ENCODE measurements at regions of chr19 and their contacts with region 1.

Region 1: DNA sequence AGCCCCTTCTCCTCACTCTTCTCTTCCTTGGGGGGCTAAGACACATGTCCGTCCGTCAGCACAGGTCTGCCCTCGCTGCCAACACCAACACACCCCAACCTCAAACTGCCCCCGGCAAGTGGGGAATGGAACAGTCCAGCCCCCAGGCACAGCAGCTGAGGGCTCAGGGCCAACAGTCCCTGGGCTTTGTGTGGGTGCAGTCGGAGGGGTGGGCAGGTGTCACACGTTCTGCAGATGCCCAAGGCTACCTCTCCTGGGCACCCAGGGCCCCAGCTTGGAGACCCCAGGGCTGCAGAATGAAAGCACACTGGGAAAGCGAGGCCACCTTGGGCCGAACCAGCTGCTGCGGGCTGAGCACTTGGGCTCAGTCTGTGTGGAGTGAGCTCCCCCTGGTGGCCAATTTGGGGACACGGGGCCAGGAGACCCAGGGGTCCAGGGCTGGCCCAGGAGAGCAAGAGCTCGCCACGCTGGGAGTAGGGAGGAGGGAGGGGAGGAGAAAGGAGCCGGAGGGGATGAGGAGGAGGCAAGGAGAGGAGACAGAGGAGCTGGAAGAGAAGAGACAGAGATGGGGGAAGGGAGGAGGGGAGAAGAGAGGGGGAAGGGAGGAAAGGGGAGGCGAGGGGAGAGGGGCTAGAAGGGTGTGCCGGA is 14.0 kb upstream of the ATP8B3 start:
- DNase-seq: peak; percentile 70 to 75 (median 73)
- H3K4me3 ChIP-seq: no peak overlapping the region
- H3K4me3 Mint-ChIP-seq: peak overlapping the region in 2 of 8 donors; percentile 2 to 59
- H3K27ac ChIP-seq: no peak overlapping the region
- H3K27ac Mint-ChIP-seq: peak overlapping the region in 1 of 7 donors; percentile 47
- H3K4me1 ChIP-seq: peaks cover 6% of the 10 kb centered on the region
- H3K4me1 Mint-ChIP-seq: peaks cover 0 to 9% (median 2%) of the 10 kb centered on the region in 4 donors
- H3K27me3 ChIP-seq: no peaks in the 10 kb centered on the region
- H3K27me3 Mint-ChIP-seq: no peaks in the 10 kb centered on the region

Region 2: DNA sequence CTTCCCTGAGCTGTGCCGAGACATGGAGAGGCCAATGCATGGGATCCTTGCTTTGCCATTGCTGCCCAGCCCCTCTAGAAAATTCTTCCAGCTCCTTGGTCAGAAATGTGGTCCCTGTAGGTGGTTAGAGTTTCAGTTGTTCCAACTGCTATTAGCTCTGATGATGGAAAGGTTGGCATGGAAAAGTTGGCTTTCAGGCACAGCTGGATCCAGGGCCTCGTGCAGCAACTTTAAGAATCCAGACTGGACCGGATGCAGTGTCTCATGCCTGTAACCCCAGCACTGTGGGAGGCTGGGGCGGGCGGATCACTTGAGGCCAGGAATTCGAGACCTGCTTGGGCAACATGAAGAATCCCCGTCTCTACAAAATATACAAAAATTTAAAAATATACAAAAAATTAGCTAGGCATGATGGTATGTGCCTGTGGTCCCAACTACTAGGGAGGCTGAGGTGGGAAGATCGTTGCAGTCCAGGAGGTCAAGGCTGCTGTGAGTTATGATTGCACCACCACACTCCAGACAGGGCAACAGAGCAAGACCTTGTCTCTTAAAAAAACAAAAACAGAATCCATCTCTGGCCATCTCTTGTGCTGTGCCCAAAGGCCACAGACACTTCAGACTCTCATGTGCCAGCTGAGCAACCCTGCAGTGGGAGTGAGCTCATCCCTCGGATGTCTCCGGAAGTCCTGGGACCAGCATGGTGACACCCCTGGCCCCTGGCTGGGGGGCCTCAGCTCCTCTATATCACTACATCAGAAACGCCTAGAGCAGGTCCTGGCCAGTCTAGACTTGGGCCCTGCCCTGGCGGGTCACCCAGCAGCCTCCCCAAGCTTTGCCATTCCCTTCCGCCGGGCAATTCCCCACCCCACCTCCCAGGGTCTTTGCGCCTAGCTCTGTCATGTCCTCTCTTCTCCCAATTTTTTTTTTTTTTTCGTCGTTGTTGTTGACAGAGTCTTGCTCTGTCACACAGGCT is 274.7 kb before region 1 on chr19:
- CTCF ChIA-PET with region 1: interaction called, 16 read pairs
- POLR2A ChIA-PET with region 1: no interaction called
- intact Hi-C with region 1: no loop called
- DNase-seq: no peak
- H3K4me3 ChIP-seq: no peak overlapping the region
- H3K4me3 Mint-ChIP-seq: no peak overlapping the region
- H3K27ac ChIP-seq: no peak overlapping the region
- H3K27ac Mint-ChIP-seq: peak overlapping the region in 1 of 7 donors; percentile 63
- H3K4me1 ChIP-seq: no peaks in the 10 kb centered on the region
- H3K4me1 Mint-ChIP-seq: peaks cover 0 to 2% (median 0%) of the 10 kb centered on the region in 4 donors
- H3K27me3 ChIP-seq: no peaks in the 10 kb centered on the region
- H3K27me3 Mint-ChIP-seq: peaks cover 3 to 15% of the 10 kb centered on the region in 2 donors

Region 3: GRCh38 chr19:1780272-1780958 is 45.6 kb before region 1 on chr19:
- CTCF ChIA-PET with region 1: interaction called, 10 read pairs
- POLR2A ChIA-PET with region 1: no interaction called
- intact Hi-C with region 1: no loop called
- DNase-seq: peak in 1 of 5 donors; percentile 36
- H3K4me3 ChIP-seq: no peak overlapping the region
- H3K4me3 Mint-ChIP-seq: no peak overlapping the region
- H3K27ac ChIP-seq: no peak overlapping the region
- H3K27ac Mint-ChIP-seq: no peak overlapping the region
- H3K4me1 ChIP-seq: no peaks in the 10 kb centered on the region
- H3K4me1 Mint-ChIP-seq: peaks cover 0 to 6% (median under 1%) of the 10 kb centered on the region in 4 donors
- H3K27me3 ChIP-seq: peaks cover 28% of the 10 kb centered on the region
- H3K27me3 Mint-ChIP-seq: peaks cover 36 to 56% of the 10 kb centered on the region in 2 donors

Region 4: GRCh38 chr19:1789261-1790041 is 36.6 kb before region 1 on chr19:
- CTCF ChIA-PET with region 1: interaction called, 22 read pairs
- POLR2A ChIA-PET with region 1: interaction called, 3 read pairs
- intact Hi-C with region 1: loop called (anchors 1 kb)
- DNase-seq: peak in 1 of 5 donors; percentile 17
- H3K4me3 ChIP-seq: no peak overlapping the region
- H3K4me3 Mint-ChIP-seq: no peak overlapping the region
- H3K27ac ChIP-seq: no peak overlapping the region
- H3K27ac Mint-ChIP-seq: no peak overlapping the region
- H3K4me1 ChIP-seq: no peaks in the 10 kb centered on the region
- H3K4me1 Mint-ChIP-seq: peaks cover 0 to 2% (median 0%) of the 10 kb centered on the region in 4 donors
- H3K27me3 ChIP-seq: no peaks in the 10 kb centered on the region
- H3K27me3 Mint-ChIP-seq: peaks cover 6 to 7% of the 10 kb centered on the region in 2 donors

Region 5: DNA sequence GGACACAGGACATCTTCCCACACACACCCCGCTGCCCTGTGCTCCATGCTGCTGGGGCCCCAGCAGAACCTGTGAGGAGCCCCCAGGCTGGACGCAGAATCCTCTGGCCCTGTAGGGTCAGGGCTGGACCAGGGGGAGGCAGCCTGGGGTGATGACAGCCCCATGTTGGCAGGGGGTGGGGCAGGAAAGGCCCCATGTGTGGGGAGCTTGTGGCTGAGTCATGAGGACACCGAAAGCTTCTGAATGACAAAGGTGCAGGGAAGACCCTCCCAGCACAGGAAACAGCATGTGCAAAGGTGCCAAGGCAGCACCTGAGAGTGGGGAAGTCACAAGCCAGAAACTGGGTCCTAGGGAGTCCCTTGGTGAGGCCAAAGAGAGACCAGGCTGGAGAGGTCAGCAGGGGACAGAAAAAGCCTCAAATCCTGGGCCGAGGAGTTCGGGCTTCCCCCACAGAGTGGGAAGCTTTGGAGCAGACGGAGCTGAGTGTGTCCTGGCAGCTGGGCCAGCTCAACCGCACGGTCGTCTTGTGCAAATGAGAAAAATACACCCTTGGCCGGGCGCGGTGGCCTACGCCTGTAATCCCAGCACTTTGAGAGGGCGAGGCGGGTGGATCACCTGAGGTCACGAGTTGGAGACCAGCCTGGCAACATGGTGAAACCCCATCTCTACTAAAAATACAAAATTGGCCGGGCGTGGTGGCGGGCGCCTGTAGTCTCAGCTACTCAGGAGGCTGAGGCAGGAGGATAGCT is 31.4 kb before region 1 on chr19:
- CTCF ChIA-PET with region 1: interaction called, 22 read pairs
- POLR2A ChIA-PET with region 1: interaction called, 3 read pairs
- intact Hi-C with region 1: no loop called
- DNase-seq: peak in 1 of 5 donors; percentile 36
- H3K4me3 ChIP-seq: no peak overlapping the region
- H3K4me3 Mint-ChIP-seq: no peak overlapping the region
- H3K27ac ChIP-seq: no peak overlapping the region
- H3K27ac Mint-ChIP-seq: no peak overlapping the region
- H3K4me1 ChIP-seq: peaks cover 7% of the 10 kb centered on the region
- H3K4me1 Mint-ChIP-seq: peaks cover 0 to 6% (median 2%) of the 10 kb centered on the region in 4 donors
- H3K27me3 ChIP-seq: no peaks in the 10 kb centered on the region
- H3K27me3 Mint-ChIP-seq: peaks cover 0 to 4% of the 10 kb centered on the region in 2 donors

Region 6: GRCh38 chr19:1837625-1838105 is 11.6 kb after region 1 on chr19:
- CTCF ChIA-PET with region 1: interaction called, 77 read pairs
- POLR2A ChIA-PET with region 1: no interaction called
- intact Hi-C with region 1: no loop called
- DNase-seq: peak in 4 of 5 donors; percentile 46 to 64 (median 54)
- H3K4me3 ChIP-seq: no peak overlapping the region
- H3K4me3 Mint-ChIP-seq: no peak overlapping the region
- H3K27ac ChIP-seq: no peak overlapping the region
- H3K27ac Mint-ChIP-seq: no peak overlapping the region
- H3K4me1 ChIP-seq: peaks cover 37% of the 10 kb centered on the region
- H3K4me1 Mint-ChIP-seq: peaks cover 11 to 64% (median 23%) of the 10 kb centered on the region in 4 donors
- H3K27me3 ChIP-seq: no peaks in the 10 kb centered on the region
- H3K27me3 Mint-ChIP-seq: no peaks in the 10 kb centered on the region

Region 7: DNA sequence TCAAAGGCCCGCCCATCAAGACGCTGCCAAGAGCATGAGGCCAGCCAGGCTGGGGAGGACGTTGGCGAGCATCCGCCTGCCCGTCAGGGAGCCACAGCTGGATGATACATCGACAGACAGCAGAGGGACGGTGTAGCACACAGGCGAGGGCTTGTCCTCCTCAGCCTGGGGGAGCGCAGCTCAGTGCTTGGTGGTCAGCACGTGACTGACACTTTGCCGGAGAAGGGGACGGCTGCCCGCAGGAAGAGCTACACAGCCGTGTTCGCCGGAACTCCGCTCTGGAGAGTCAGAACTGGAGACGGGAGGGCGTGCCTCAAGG is 149.1 kb after region 1 on chr19:
- CTCF ChIA-PET with region 1: no interaction called
- POLR2A ChIA-PET with region 1: no interaction called
- intact Hi-C with region 1: no loop called
- DNase-seq: peak in 1 of 5 donors; percentile 14
- H3K4me3 ChIP-seq: no peak overlapping the region
- H3K4me3 Mint-ChIP-seq: no peak overlapping the region
- H3K27ac ChIP-seq: no peak overlapping the region
- H3K27ac Mint-ChIP-seq: no peak overlapping the region
- H3K4me1 ChIP-seq: no peaks in the 10 kb centered on the region
- H3K4me1 Mint-ChIP-seq: peaks cover 5 to 30% (median 10%) of the 10 kb centered on the region in 4 donors
- H3K27me3 ChIP-seq: no peaks in the 10 kb centered on the region
- H3K27me3 Mint-ChIP-seq: no peaks in the 10 kb centered on the region